Endothelial cell of umbilical vein (primary cell): ENCODE measurements at regions of chr18 and their contacts with region 1.

Region 1: GRCh38 chr18:28794459-28795245 is 617.7 kb upstream of the CDH2 start:
- DNase-seq: peak; percentile 93
- H3K4me3 ChIP-seq: no peak overlapping the region
- H3K27ac ChIP-seq: peak overlapping the region; percentile 99
- H3K4me1 ChIP-seq: peaks cover 76% of the 10 kb centered on the region
- H3K27me3 ChIP-seq: no peaks in the 10 kb centered on the region
- CTCF ChIP-seq: no peak
- POLR2A ChIP-seq: no peak

Region 2: GRCh38 chr18:28541276-28541930 is 253.2 kb before region 1 on chr18:
- CTCF ChIA-PET with region 1: no interaction called
- POLR2A ChIA-PET with region 1: no interaction called
- dilution Hi-C with region 1: no loop called
- intact Hi-C with region 1: loop called (anchors 5 kb)
- DNase-seq: no peak
- H3K4me3 ChIP-seq: no peak overlapping the region
- H3K27ac ChIP-seq: no peak overlapping the region
- H3K4me1 ChIP-seq: no peaks in the 10 kb centered on the region
- H3K27me3 ChIP-seq: no peaks in the 10 kb centered on the region
- CTCF ChIP-seq: no peak
- POLR2A ChIP-seq: no peak

Region 3: GRCh38 chr18:28735731-28736130 is 58.9 kb before region 1 on chr18:
- CTCF ChIA-PET with region 1: no interaction called
- POLR2A ChIA-PET with region 1: no interaction called
- dilution Hi-C with region 1: no loop called
- intact Hi-C with region 1: loop called (anchors 2 kb)
- DNase-seq: peak; percentile 59
- H3K4me3 ChIP-seq: no peak overlapping the region
- H3K27ac ChIP-seq: peak overlapping the region; percentile 45
- H3K4me1 ChIP-seq: peaks cover 8% of the 10 kb centered on the region
- H3K27me3 ChIP-seq: no peaks in the 10 kb centered on the region
- CTCF ChIP-seq: no peak
- POLR2A ChIP-seq: no peak

Region 4: DNA sequence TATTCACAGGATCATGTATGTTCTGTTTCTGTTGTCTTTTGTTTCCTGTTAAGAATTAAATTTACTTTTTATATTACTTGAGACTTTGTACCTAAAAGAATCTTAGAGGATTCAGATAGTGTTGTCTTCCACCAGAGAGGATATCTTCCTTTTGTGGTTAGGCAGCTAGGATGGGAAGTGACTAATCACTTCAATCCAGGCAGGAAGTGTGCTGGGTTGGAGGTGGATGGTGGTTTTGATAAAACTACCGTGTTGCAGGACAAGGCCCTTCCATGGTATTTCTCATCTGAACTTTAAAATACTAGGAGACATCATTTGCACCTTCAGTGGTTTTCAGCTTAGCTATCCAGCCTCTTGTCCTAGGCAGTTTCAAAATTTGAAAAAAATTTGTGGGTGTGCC is 110.9 kb after region 1 on chr18:
- CTCF ChIA-PET with region 1: no interaction called
- POLR2A ChIA-PET with region 1: no interaction called
- dilution Hi-C with region 1: no loop called
- intact Hi-C with region 1: no loop called
- DNase-seq: peak; percentile 49
- H3K4me3 ChIP-seq: no peak overlapping the region
- H3K27ac ChIP-seq: no peak overlapping the region
- H3K4me1 ChIP-seq: peaks cover 10% of the 10 kb centered on the region
- H3K27me3 ChIP-seq: no peaks in the 10 kb centered on the region
- CTCF ChIP-seq: no peak
- POLR2A ChIP-seq: no peak

Region 5: DNA sequence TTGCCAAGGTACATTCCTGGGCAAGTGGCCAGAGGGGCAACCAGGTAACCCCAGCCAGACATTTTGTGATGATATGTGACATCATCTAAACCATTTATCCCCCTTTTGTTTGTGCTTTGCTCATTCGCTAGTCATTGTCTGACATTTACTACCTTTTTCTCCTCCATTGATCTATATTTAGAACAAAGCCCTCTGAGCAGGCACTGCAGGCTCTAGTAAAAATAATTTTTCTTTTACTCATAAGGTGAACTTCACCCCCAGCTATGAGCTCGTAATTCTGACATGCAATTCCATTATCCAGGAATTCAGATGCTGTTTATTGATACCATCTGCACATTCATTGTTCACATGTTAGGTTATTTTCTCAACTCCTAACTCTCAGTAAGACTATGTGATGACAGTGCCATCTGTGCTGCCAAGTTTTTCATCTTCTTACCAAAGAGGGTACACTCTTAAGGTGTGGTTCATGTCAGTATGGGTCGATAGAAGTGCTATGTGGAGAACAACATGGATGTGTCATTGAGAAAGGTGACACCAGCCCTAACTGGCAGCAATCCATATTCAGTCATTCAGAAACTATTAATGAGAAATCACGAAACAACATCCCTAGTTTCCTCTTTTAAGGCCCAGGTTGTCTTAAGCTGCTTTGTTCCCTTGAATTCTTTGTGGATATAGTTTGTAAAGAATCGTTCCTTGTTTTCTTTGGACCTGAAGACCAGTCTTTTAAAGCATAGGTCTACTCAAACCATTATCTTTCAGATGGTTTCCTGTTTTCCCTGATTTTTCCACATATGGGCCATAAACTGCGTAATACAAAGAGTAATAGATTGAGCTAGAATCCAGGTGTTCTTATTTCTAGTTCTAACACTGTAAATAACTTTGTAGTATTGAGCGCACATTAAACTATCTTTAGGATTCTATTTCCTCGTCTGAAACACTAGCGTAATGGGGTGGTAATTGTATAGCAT is 360.4 kb after region 1 on chr18:
- CTCF ChIA-PET with region 1: no interaction called
- POLR2A ChIA-PET with region 1: no interaction called
- dilution Hi-C with region 1: no loop called
- intact Hi-C with region 1: loop called (anchors 1 kb)
- DNase-seq: peak; percentile 86
- H3K4me3 ChIP-seq: peak overlapping the region in 1 of 3 experiments; percentile 51
- H3K27ac ChIP-seq: peak overlapping the region; percentile 96
- H3K4me1 ChIP-seq: peaks cover 54% of the 10 kb centered on the region
- H3K27me3 ChIP-seq: no peaks in the 10 kb centered on the region
- CTCF ChIP-seq: no peak
- POLR2A ChIP-seq: peak; percentile 45